ENCODE measurements at regions of chr18 and their contacts with region 1.

Region 1: DNA sequence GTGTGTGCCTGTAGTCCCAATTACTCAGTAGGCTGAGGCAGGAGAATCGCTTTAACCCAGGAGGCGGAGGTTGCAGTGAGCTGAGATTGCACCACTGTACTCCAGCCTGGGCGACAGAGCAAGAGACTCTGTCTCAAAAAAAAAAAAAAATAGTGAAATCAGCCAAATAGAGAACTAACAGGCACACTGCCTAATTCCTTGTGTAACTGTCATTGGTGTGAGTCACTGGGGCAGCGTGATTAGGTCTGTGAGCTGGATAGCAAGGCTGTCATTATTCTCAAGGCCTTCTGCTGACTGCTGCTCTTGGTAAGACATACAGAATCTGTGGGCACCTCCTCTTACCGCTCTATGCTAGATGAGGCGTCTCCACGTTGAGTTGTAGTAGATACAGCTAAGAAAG is 270.3 kb downstream of the NEDD4L start:
- DNase-seq: peak; percentile 49
- H3K4me3 Mint-ChIP-seq: peak overlapping the region; percentile 59
- H3K27ac Mint-ChIP-seq: peak overlapping the region; percentile 58
- H3K4me1 Mint-ChIP-seq: peaks cover 78% of the 10 kb centered on the region
- H3K27me3 Mint-ChIP-seq: no peaks in the 10 kb centered on the region
- CTCF ChIP-seq: no peak

Region 2: DNA sequence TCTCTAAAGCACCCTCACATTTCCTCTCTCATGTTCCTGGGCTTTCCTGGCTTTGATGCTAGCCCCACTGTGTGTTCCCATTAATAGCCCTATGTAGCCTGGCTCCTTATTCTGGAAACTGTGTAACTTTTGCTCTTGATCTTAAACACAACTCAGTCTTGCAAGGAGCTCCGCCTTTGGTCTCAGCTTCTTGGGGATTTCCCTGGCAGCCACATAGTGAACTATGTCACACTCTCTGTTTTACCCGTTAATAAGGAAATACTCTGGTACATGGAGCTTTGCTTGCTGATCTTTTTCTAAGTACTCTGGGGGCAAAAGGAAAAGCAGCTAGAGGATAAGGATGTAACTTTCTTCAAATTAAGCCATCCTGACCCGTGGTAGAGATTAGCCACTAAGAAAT is 10.9 kb before region 1 on chr18:
- CTCF ChIA-PET with region 1: interaction called, 14 read pairs
- intact Hi-C with region 1: no loop called
- DNase-seq: no peak
- H3K4me3 Mint-ChIP-seq: no peak overlapping the region
- H3K27ac Mint-ChIP-seq: peak overlapping the region; percentile 9
- H3K4me1 Mint-ChIP-seq: peaks cover 48% of the 10 kb centered on the region
- H3K27me3 Mint-ChIP-seq: no peaks in the 10 kb centered on the region
- CTCF ChIP-seq: no peak

Region 3: GRCh38 chr18:58349650-58350049 is 35.4 kb after region 1 on chr18:
- CTCF ChIA-PET with region 1: no interaction called
- intact Hi-C with region 1: no loop called
- DNase-seq: no peak
- H3K4me3 Mint-ChIP-seq: no peak overlapping the region
- H3K27ac Mint-ChIP-seq: no peak overlapping the region
- H3K4me1 Mint-ChIP-seq: peaks cover 7% of the 10 kb centered on the region
- H3K27me3 Mint-ChIP-seq: no peaks in the 10 kb centered on the region
- CTCF ChIP-seq: no peak

Region 4: DNA sequence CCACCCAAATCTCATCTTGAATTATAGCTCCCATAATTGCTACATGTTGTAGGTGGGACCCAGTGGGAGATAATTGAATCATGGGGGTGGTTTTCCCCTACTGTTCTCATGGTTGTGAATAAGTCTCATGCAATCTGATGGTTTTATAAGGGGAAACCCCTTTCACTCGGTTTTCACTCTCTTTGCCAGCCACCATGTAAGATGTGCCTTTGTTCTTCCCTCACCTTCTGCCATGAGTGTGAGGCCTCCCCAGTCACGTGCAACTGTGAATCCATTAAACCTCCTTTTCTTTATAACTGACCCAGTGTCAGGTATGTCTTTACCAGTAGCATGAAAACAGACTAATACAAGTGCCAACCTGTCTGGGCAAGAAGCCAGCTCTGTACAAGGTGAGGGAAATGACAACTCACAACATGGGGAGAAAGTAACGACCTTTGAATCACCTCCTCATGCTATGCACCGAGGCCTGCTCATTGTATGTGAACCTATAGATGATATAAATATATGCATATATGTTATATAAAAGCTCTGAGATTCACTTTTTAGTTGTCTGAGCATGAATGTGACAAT is 152.4 kb after region 1 on chr18:
- CTCF ChIA-PET with region 1: no interaction called
- intact Hi-C with region 1: no loop called
- DNase-seq: peak; percentile 10
- H3K4me3 Mint-ChIP-seq: no peak overlapping the region
- H3K27ac Mint-ChIP-seq: no peak overlapping the region
- H3K4me1 Mint-ChIP-seq: no peaks in the 10 kb centered on the region
- H3K27me3 Mint-ChIP-seq: peaks cover 26% of the 10 kb centered on the region
- CTCF ChIP-seq: no peak

Measured in Calu3 (cell line).